Cardiac septum (tissue), 1 donor: ENCODE measurements at regions of chr9 and their contacts with region 1.

Region 1: GRCh38 chr9:19174127-19174912 is 47.0 kb upstream of the PLIN2 start:
- DNase-seq: no peak

Region 2: GRCh38 chr9:19048966-19049916 is 125.1 kb before region 1 on chr9 and contains the start of gene RRAGA:
- intact Hi-C with region 1: loop called (anchors 5 kb)
- DNase-seq: peak; percentile 96
- total RNA-seq, gene RRAGA: 86.6 TPM

Region 3: GRCh38 chr9:19127881-19128500 is 46.3 kb before region 1 on chr9:
- intact Hi-C with region 1: loop called (anchors 5 kb)
- DNase-seq: no peak